Endothelial cell of umbilical vein (primary cell): ENCODE measurements at regions of chr6 and their contacts with region 1.

Region 1: DNA sequence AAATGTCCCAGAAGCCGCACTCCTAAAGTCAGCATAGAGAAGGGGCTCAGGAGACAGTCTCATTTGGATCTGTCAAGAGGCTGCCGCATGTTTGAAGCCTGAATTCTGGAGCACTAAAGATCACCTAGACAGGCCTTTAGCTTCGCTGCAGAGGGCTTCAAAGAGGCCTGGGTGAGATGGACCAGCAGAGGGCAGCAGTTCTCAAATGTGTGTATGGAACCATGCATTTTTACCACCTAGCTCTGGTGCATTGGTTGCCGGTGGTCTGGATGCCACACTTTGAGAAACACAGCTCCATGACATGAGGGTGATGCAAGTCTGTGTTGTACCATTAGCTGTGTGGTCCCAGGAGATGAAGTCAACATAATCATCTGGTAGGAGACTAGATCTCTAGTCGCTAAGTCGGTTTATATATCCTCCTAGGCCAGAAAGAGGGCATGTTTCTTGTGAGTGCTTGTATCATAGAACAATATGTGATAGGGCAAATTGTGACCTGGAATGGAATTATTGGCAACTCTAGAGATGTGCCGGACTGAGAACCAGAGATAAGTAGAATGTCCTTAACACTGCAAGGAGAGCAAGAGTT is 64.8 kb downstream of the KIAA0319 start:
- DNase-seq: peak; percentile 56
- H3K4me3 ChIP-seq: no peak overlapping the region
- H3K27ac ChIP-seq: no peak overlapping the region
- H3K4me1 ChIP-seq: no peaks in the 10 kb centered on the region
- H3K27me3 ChIP-seq: peaks cover 2 to 4% of the 10 kb centered on the region in 2 experiments
- CTCF ChIP-seq: peak; percentile 80 to 85
- POLR2A ChIP-seq: no peak

Region 2: DNA sequence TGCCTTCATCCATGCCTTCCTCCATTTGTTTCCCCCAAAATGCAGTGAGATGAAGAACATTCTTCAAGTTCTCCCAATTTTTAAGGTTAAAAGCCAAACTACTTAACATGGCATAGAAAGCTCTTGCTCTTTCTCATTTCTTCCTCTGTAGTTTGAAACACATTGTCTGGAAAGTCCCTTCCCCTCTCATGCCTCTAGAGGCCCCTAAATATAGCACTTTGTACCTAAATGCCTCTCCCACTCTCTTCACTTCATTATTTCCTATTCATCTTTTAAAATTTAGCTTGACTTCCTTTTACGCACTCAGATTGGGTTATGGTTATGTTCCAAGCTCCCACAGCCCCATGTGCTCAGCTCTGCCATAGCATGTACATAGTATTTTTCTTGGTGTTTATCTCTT is 1622.5 kb before region 1 on chr6:
- CTCF ChIA-PET with region 1: no interaction called
- POLR2A ChIA-PET with region 1: no interaction called
- dilution Hi-C with region 1: no loop called
- intact Hi-C with region 1: no loop called
- DNase-seq: no peak
- H3K4me3 ChIP-seq: no peak overlapping the region
- H3K27ac ChIP-seq: no peak overlapping the region
- H3K4me1 ChIP-seq: peaks cover 3% of the 10 kb centered on the region
- H3K27me3 ChIP-seq: no peaks in the 10 kb centered on the region
- CTCF ChIP-seq: no peak
- POLR2A ChIP-seq: no peak

Region 3: DNA sequence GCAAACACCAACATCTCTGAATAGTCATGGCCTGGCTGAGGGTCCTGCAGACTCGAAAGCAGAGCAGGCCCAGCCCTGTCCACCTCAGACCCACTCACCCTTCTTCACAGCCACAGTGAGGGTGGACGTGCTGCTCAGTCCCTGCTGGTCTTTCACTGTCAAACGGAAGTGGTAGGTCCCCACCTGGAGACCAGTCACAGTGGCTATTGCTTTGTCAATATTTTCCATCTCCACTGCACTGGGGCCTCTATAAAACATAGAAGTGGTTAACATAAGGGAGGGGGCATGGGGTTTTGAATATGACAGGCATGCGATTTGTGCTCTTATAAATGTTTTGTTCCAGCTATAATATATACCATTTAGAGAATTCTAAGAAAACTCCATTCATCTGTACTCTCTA is 12.5 kb before region 1 on chr6:
- CTCF ChIA-PET with region 1: interaction called, 18 read pairs
- POLR2A ChIA-PET with region 1: no interaction called
- dilution Hi-C with region 1: no loop called
- intact Hi-C with region 1: no loop called
- DNase-seq: no peak
- H3K4me3 ChIP-seq: no peak overlapping the region
- H3K27ac ChIP-seq: no peak overlapping the region
- H3K4me1 ChIP-seq: no peaks in the 10 kb centered on the region
- H3K27me3 ChIP-seq: no peaks in the 10 kb centered on the region
- CTCF ChIP-seq: no peak
- POLR2A ChIP-seq: no peak

Region 4: GRCh38 chr6:24614043-24614420 is 32.9 kb after region 1 on chr6:
- CTCF ChIA-PET with region 1: interaction called, 13 read pairs
- POLR2A ChIA-PET with region 1: no interaction called
- dilution Hi-C with region 1: no loop called
- intact Hi-C with region 1: no loop called
- DNase-seq: no peak
- H3K4me3 ChIP-seq: no peak overlapping the region
- H3K27ac ChIP-seq: no peak overlapping the region
- H3K4me1 ChIP-seq: no peaks in the 10 kb centered on the region
- H3K27me3 ChIP-seq: no peaks in the 10 kb centered on the region
- CTCF ChIP-seq: no peak
- POLR2A ChIP-seq: no peak

Region 5: DNA sequence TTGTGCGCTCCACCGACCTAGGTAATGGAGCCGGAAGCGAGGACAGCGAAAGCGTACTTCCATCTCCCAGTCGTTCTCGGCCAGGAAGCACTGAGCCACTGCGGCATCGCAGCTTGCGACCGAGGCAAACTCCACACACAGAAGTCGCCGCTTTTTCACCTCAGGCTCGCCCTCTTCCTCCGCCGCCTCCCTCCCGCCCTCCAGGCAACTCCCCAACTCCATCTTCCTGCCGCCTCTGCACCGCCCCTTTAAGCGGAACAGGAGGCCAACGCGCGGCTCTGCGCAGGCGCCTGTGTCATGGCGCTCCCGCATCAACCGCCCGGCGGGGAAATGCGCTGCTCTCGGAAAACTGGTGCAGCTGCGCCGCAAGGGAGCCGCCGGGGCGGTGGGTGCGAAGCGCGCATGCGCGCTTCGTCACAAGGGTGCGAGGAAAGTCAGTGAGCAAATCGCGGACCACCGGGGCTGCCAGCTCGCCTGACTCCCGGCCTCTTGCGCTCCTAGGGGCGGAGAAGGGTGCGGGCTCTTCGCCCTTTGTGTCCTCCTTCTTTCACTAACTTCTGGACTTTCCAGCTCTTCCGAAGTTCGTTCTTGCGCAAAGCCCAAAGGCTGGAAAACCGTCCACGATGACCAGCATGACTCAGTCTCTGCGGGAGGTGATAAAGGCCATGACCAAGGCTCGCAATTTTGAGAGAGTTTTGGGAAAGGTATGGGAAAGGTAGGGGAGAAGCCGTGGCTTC is 85.6 kb after region 1 on chr6 and contains the starts of genes ACOT13 and TDP2:
- CTCF ChIA-PET with region 1: interaction called, 11 read pairs
- POLR2A ChIA-PET with region 1: no interaction called
- dilution Hi-C with region 1: no loop called
- intact Hi-C with region 1: loop called (anchors 1 kb)
- DNase-seq: peak; percentile 98
- H3K4me3 ChIP-seq: peak within 1 kb of the TSS; percentile 71 to 92 (median 90)
- H3K27ac ChIP-seq: peak within 1 kb of the TSS; percentile 75
- H3K4me1 ChIP-seq: peaks cover 13% of the 10 kb centered on the region
- H3K27me3 ChIP-seq: no peaks in the 10 kb centered on the region
- CTCF ChIP-seq: peak; percentile 34 to 68
- POLR2A ChIP-seq: peak; percentile 83
- total RNA-seq, gene ACOT13: 15.3 and 24.1 TPM in 2 replicates
- total RNA-seq, gene TDP2: 35.3 and 39.2 TPM in 2 replicates

Region 6: DNA sequence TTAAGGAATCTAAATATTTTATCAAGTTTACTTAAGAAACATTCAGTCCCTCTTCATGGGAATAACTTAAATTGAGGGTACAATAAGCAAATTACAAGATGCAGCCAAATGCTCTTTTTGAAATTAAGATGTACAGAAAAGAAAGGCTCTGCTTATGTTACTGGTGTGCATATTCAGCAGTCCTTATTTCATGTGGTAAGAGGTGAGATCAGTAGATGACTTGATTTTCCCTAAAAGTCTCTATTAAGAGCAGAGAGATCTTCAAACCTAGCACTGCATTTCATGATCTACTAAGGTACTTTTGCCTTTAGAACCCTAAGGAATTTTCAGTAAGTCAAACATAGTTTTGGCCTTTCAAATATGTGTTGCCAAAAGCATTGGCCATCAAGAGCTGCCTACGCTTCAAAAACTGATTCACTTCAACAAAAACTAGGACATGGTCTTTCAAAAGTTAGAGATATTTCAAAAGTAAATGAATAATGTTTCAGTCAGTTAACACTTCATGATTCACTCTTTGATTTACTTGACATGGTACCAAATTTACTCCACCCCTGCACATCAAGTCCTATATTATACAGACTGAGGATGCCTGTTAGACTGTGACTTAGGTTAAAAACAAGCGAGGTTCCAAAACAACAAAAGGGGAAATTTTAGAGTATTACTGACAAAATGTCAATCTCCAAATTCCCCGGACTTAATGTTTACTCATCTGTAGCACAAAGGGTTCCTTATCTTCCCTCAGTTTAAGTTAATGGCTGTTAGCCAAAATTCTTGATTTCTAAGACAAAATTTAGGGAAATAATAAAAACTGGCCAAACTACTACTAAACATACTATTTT is 118.6 kb after region 1 on chr6:
- CTCF ChIA-PET with region 1: interaction called, 124 read pairs
- POLR2A ChIA-PET with region 1: no interaction called
- dilution Hi-C with region 1: no loop called
- intact Hi-C with region 1: loop called (anchors 1 kb)
- DNase-seq: peak; percentile 51
- H3K4me3 ChIP-seq: no peak overlapping the region
- H3K27ac ChIP-seq: no peak overlapping the region
- H3K4me1 ChIP-seq: no peaks in the 10 kb centered on the region
- H3K27me3 ChIP-seq: no peaks in the 10 kb centered on the region
- CTCF ChIP-seq: no peak
- POLR2A ChIP-seq: no peak

Region 7: DNA sequence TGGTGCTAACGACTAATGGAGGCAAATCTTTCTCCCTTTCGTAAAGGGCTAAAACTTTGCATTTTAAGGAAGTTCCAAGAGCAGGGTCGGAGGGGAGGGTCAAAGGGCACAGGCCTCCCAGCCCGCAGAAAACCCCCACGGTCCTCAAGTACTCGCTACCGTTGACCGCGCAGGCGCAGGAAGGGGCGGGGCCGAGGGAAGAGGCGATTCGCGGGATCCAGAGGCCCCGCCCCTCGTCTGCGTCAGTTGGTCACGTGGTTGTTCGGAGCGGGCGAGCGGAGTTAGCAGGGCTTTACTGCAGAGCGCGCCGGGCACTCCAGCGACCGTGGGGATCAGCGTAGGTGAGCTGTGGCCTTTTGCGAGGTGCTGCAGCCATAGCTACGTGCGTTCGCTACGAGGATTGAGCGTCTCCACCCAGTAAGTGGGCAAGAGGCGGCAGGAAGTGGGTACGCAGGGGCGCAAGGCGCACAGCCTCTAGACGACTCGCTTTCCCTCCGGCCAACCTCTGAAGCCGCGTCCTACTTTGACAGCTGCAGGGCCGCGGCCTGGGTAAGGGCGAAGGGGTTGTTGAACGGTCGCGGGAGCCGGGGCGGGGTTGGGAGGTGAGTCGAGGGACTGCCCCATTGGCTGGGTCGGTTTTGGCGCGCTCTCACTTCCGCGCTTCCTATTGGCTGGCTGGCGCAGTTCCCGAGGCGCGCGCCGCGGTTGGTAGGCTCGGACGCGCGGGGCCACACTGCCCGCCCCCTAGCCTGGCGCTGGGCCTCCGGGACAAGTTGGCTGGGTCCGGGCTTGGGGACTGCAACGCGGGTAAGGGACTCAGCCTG is 193.7 kb after region 1 on chr6 and contains the start of gene GMNN:
- CTCF ChIA-PET with region 1: interaction called, 99 read pairs
- POLR2A ChIA-PET with region 1: no interaction called
- dilution Hi-C with region 1: no loop called
- intact Hi-C with region 1: no loop called
- DNase-seq: peak; percentile 94
- H3K4me3 ChIP-seq: peak within 1 kb of the TSS; percentile 41 to 99 (median 82)
- H3K27ac ChIP-seq: peak within 1 kb of the TSS; percentile 54
- H3K4me1 ChIP-seq: peaks cover 23% of the 10 kb centered on the region
- H3K27me3 ChIP-seq: no peaks in the 10 kb centered on the region
- CTCF ChIP-seq: no peak
- POLR2A ChIP-seq: peak; percentile 85
- total RNA-seq, gene GMNN: 51.9 and 52.6 TPM in 2 replicates

Region 8: GRCh38 chr6:24891004-24891403 is 309.8 kb after region 1 on chr6:
- CTCF ChIA-PET with region 1: no interaction called
- POLR2A ChIA-PET with region 1: no interaction called
- dilution Hi-C with region 1: no loop called
- intact Hi-C with region 1: no loop called
- DNase-seq: no peak
- H3K4me3 ChIP-seq: no peak overlapping the region
- H3K27ac ChIP-seq: no peak overlapping the region
- H3K4me1 ChIP-seq: no peaks in the 10 kb centered on the region
- H3K27me3 ChIP-seq: no peaks in the 10 kb centered on the region
- CTCF ChIP-seq: no peak
- POLR2A ChIP-seq: no peak